AG04449 (cell line): ENCODE measurements at regions of chr10 and their contacts with region 1.

Region 1: GRCh38 chr10:69800109-69800508 is 1.6 kb upstream of the COL13A1 start:
- DNase-seq: peak; percentile 7
- H3K4me3 ChIP-seq: no peak overlapping the region
- CTCF ChIP-seq: peak; percentile 83

Region 2: DNA sequence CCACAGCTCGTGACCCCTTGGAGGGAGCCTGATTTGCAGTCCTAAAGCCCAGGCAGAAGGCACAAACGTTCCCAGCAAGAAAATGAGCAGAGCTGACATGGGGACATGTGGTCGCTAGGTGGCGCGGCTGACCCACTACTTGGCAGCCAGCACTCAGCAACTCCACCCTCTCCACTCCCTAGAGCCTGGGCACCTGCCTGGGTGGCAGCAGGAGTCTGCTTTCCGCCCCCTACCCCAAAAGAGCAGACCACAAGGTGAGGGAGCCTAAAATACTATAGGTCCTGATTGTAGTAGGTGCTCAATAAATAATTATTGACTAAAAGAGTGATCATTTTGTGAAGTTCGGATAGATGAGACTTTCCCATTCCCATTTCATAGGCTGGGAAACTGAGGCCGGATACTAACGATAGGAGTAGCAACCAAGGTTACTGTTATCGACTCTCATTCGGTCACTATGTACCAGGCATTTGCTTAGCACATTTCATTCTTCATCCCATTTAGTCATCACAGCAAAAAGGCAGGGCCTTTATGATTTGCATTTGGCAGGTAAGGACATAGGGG is 284.3 kb before region 1 on chr10:
- CTCF ChIA-PET with region 1: no interaction called
- POLR2A ChIA-PET with region 1: no interaction called
- DNase-seq: no peak
- H3K4me3 ChIP-seq: no peak overlapping the region
- CTCF ChIP-seq: peak; percentile 95

Region 3: GRCh38 chr10:69639291-69640195 is 160.6 kb before region 1 on chr10:
- CTCF ChIA-PET with region 1: interaction called, 70 read pairs
- POLR2A ChIA-PET with region 1: no interaction called
- DNase-seq: no peak
- H3K4me3 ChIP-seq: no peak overlapping the region
- CTCF ChIP-seq: peak; percentile 76

Region 4: DNA sequence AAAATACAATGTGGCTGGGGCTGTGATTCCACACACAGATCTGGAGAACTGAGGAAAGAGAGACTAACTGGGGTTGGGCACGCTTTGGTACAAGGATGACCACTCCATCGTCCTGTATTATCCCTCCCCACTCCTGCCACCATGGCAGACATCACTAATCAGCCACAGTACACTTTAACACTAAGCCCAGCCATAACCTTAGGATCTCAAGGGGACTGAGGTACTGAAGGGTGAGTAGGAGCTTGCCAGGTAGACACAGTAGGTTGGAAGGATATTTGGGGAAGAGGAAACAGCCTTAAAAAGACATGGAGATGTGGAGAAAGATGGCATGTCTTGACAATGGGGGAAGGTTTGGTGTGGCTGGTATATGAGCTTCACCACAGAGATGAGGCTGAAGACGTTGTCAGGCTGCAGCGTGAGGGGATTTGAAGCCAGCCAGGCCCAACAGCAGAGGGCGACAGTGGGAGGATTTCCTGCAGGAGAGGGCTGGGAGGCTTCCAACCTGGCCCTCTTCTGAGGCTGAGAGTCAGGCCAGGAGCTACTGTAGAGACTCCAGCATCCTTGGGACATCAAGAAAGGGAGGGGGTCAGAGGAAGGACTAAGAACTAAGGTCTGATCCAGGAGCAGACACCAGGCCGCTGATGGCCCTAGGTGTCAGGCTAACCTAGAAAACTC is 57.0 kb before region 1 on chr10:
- CTCF ChIA-PET with region 1: interaction called, 18 read pairs
- POLR2A ChIA-PET with region 1: no interaction called
- DNase-seq: no peak
- H3K4me3 ChIP-seq: no peak overlapping the region
- CTCF ChIP-seq: peak; percentile 78

Region 5: DNA sequence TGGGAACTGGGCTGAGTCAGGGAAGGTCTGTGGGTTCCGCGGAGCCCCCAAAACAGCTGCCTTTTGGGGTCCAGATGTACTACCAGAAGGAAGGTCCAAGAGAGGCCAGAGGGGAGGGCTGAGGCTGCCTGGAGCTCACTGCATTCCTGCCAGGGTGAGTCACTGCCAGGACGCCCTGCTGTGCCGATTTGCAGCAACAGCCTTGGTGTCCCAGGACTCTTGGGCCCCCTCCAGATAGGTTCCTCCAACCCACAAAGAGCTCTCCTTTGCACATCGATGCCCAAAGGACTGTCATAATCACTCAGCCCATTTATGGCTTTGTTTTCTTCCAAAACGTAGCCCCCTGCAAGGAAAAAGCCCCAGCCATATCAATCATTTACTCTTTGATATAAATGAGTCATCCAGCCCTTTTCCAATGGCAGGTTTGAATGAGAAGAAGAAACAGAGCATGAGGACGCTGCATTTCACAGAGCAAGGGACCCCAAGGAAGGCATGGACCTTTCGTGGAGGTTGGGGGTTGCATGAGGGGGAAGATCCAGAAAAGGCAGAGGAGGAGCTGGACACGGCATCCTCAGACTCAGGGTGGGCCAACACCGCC is 30.6 kb before region 1 on chr10:
- CTCF ChIA-PET with region 1: interaction called, 21 read pairs
- POLR2A ChIA-PET with region 1: no interaction called
- DNase-seq: peak; percentile 31
- H3K4me3 ChIP-seq: no peak overlapping the region
- CTCF ChIP-seq: no peak

Region 6: GRCh38 chr10:69774596-69774995 is 25.5 kb before region 1 on chr10:
- CTCF ChIA-PET with region 1: interaction called, 21 read pairs
- POLR2A ChIA-PET with region 1: no interaction called
- DNase-seq: no peak
- H3K4me3 ChIP-seq: no peak overlapping the region
- CTCF ChIP-seq: no peak

Region 7: DNA sequence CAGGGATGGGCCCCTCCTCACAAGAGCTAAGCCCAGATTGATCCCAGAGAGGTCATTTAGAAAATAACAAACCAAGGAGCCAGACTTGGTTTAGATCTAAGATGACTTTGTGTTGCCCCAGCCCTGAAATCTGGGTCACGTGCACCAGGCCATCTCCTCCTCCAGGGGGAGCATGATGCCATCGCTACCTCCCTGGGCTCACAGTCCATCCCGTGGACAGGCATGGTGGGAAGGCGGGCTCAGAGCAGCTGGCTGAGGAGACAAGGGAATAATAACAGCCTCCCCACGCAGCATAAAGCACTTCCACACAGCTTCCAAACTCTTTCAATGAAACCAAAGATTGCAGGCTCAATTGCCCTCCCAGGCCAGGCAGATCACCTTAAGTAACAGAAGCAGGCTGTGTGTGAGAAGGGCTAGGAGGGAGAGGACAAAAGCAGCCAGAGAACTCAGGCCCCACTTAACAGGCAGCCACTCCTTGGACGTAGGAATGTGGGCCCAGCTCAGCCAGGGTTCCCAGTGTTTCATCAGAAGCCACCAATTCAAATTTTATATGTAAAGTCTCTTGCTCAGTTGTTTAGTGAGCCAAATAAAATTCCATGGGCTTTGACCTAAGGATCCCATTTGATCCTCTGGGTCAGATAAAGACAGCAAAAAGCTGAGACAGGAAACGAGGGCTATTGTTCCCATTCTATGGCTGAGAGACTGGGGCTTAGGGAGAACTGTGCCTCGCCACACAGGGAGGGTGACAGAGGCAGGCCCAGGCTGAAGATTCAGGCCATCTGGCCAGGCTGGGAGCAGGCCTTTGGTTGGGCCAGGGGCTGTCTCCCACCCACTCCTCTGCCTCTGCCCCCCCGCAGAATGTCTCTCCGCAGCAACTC is 101.8 kb after region 1 on chr10:
- CTCF ChIA-PET with region 1: interaction called, 29 read pairs
- POLR2A ChIA-PET with region 1: no interaction called
- DNase-seq: no peak
- H3K4me3 ChIP-seq: no peak overlapping the region
- CTCF ChIP-seq: peak; percentile 84